ENCODE measurements at regions of chr3 and their contacts with region 1.

Region 1: DNA sequence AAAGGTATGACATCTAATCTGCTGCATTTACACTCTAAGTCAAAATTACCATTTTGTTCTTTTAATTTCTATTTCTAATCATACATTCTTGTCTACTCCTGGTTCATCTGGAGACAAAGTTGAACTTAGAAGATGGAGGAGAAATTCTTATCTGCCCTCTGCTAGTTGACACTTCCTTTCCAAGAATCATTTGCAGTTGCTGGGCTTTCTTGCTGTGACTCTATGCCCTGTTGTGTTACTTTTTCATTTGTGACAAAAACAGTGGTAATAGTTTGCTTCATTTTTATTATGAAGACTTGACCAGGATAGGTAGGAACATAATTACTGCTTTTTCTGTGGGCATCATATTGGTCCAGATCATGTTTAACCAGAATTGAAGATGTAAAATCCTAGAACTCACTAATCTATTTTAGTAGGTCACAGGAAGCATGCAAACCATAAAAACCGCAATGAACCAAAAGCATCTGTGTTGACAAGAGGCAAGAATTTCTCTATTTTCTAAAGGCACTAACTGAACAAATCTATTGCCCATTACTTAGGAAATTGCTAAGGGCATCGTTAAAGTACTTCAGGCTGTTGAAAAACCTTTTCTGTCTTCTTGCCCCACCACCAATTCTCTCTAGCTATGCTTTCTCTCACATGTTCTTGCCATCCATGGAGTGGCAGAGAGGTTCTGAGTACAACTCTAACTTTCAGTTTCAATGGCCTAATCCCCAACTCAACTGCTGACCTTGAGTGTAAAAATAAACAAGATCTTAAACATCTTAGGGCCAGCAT is 4.2 kb upstream of the CCR2 start:
- DNase-seq: no peak
- ATAC-seq: peak; percentile 46
- H3K4me3 Mint-ChIP-seq: peak overlapping the region; percentile 74
- H3K27ac Mint-ChIP-seq: peak overlapping the region; percentile 92
- H3K4me1 Mint-ChIP-seq: peaks cover 59% of the 10 kb centered on the region
- H3K27me3 Mint-ChIP-seq: no peaks in the 10 kb centered on the region

Region 2: DNA sequence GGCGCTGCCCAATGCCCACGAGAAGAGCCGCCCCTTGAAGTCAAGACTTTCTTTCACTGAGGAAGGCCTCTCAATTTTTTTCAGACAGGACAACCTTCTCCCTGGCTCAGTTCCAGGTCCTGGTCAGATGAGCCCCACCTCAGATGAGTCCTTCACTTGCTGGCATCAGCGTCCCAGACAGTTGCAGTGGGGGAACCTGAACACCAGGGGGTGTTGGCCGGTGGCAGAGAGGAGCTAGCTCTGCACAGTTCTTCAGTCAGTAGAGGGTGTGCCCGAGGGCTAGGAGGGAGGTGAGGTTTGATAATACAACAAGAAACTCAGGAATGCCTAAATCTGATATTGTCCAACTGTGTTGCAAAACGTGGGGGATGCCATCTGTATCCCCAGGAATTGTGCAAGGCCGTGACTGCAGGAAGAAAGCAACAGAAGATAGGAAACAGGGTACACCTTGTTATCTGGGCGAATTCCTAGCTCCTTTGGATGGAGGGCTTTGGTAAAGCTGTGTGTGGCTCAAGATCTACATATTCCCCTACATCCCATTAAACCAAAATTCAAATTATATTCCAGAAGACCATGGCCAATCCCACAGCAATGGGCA is 73.1 kb before region 1 on chr3:
- POLR2A ChIA-PET with region 1: interaction called, 12 read pairs
- DNase-seq: peak; percentile 81
- ATAC-seq: peak; percentile 75
- H3K4me3 Mint-ChIP-seq: peak overlapping the region; percentile 3
- H3K27ac Mint-ChIP-seq: peak overlapping the region; percentile 87
- H3K4me1 Mint-ChIP-seq: peaks cover 56% of the 10 kb centered on the region
- H3K27me3 Mint-ChIP-seq: peaks cover 10% of the 10 kb centered on the region

Measured in activated naive CD8-positive, alpha-beta T cell treated with anti-CD3 and anti-CD28 coated beads, Interleukin-2, amount 10 ng/mL, durations not matched to agents 7 days and 5 days (primary cell).